ENCODE measurements at regions of chr18 and their contacts with region 1.

Region 1: DNA sequence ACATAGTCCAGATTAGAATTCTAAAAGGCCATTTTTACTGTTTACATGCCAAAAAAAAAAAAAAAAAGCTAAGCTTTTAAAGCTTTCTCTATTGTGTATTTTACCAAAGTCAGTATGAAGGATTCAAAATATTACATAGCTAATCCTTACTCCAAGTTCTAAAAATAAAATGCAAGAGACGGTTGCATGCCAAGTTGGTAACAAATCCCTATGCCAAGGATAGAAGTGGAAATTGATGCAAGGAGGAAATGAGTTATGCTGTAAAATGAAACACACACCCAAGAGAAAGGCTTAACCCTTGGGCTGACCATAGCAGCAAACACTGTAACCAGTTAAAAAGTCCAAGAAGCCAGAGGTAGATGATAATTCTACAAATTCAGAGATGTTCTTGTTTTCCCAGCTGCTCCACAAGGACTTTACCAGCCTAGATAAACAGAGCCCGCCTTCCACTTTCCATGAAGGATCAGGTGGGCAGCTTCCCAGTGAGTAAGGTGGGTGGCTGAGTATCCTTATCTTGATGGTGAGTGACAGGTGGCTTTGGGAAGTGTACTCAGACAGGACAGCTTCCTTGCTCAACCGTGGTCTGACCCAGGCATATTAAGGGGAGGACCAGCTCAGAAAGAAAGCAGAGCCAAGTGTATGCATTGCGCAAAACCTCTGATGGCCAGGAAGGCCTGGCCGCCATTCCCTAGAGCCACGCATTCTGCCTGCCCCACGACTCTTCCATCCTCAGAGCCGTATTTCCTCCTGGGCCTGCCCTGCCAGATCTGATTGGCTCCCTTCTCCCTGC is 34.4 kb downstream of the ATP8B1 start:
- DNase-seq: no peak
- ATAC-seq: no peak
- H3K4me3 ChIP-seq: no peak overlapping the region
- H3K27ac ChIP-seq: no peak overlapping the region
- H3K4me1 ChIP-seq: peaks cover 12% of the 10 kb centered on the region
- H3K27me3 ChIP-seq: no peaks in the 10 kb centered on the region
- CTCF ChIP-seq: no peak

Region 2: GRCh38 chr18:56770873-56771272 is 997.9 kb before region 1 on chr18:
- CTCF ChIA-PET with region 1: interaction called, 10 read pairs
- POLR2A ChIA-PET with region 1: no interaction called
- in situ Hi-C with region 1: no loop called
- intact Hi-C with region 1: no loop called
- DNase-seq: no peak
- ATAC-seq: no peak
- H3K4me3 ChIP-seq: no peak overlapping the region
- H3K27ac ChIP-seq: no peak overlapping the region
- H3K4me1 ChIP-seq: no peaks in the 10 kb centered on the region
- H3K27me3 ChIP-seq: no peaks in the 10 kb centered on the region
- CTCF ChIP-seq: no peak

Region 3: GRCh38 chr18:57698571-57699276 is 70.0 kb before region 1 on chr18:
- CTCF ChIA-PET with region 1: no interaction called
- POLR2A ChIA-PET with region 1: no interaction called
- in situ Hi-C with region 1: no loop called
- intact Hi-C with region 1: no loop called
- DNase-seq: no peak
- ATAC-seq: no peak
- H3K4me3 ChIP-seq: no peak overlapping the region
- H3K27ac ChIP-seq: no peak overlapping the region
- H3K4me1 ChIP-seq: peaks cover 4% of the 10 kb centered on the region; the same call in 1 of the 2 replicates
- H3K27me3 ChIP-seq: no peaks in the 10 kb centered on the region
- CTCF ChIP-seq: no peak

Measured in Panc1 (cell line).